ENCODE measurements at regions of chr3 and their contacts with region 1.

Region 1: GRCh38 chr3:120095226-120095978 is 1.2 kb upstream of the GSK3B start:
- DNase-seq: peak; percentile 91
- ATAC-seq: peak; percentile 44
- H3K4me3 Mint-ChIP-seq: no peak overlapping the region
- H3K27ac Mint-ChIP-seq: no peak overlapping the region
- H3K4me1 Mint-ChIP-seq: peaks cover 18% of the 10 kb centered on the region
- H3K27me3 Mint-ChIP-seq: no peaks in the 10 kb centered on the region

Region 2: GRCh38 chr3:119559441-119559963 is 535.9 kb before region 1 on chr3 and contains the start of gene CD80:
- POLR2A ChIA-PET with region 1: interaction called, 13 read pairs
- DNase-seq: peak; percentile 68
- ATAC-seq: peak; percentile 91
- H3K4me3 Mint-ChIP-seq: peak within 1 kb of the TSS; percentile 83
- H3K27ac Mint-ChIP-seq: peak within 1 kb of the TSS; percentile 85
- H3K4me1 Mint-ChIP-seq: peaks cover 46% of the 10 kb centered on the region
- H3K27me3 Mint-ChIP-seq: no peaks in the 10 kb centered on the region
- total RNA-seq, gene CD80: 11.6 to 15.2 TPM

Region 3: GRCh38 chr3:119912220-119912619 is 183.2 kb before region 1 on chr3:
- POLR2A ChIA-PET with region 1: interaction called, 16 read pairs
- DNase-seq: no peak
- ATAC-seq: peak; percentile 70
- H3K4me3 Mint-ChIP-seq: peak overlapping the region; percentile 67
- H3K27ac Mint-ChIP-seq: peak overlapping the region; percentile 68
- H3K4me1 Mint-ChIP-seq: peaks cover 20% of the 10 kb centered on the region
- H3K27me3 Mint-ChIP-seq: no peaks in the 10 kb centered on the region

Region 4: GRCh38 chr3:119990888-119991287 is 104.5 kb before region 1 on chr3:
- POLR2A ChIA-PET with region 1: no interaction called
- DNase-seq: no peak
- ATAC-seq: no peak
- H3K4me3 Mint-ChIP-seq: no peak overlapping the region
- H3K27ac Mint-ChIP-seq: no peak overlapping the region
- H3K4me1 Mint-ChIP-seq: peaks cover 6% of the 10 kb centered on the region
- H3K27me3 Mint-ChIP-seq: no peaks in the 10 kb centered on the region

Region 5: GRCh38 chr3:120052225-120052624 is 43.2 kb before region 1 on chr3:
- POLR2A ChIA-PET with region 1: interaction called, 16 read pairs
- DNase-seq: no peak
- ATAC-seq: peak; percentile 85
- H3K4me3 Mint-ChIP-seq: peak overlapping the region; percentile 28
- H3K27ac Mint-ChIP-seq: peak overlapping the region; percentile 21
- H3K4me1 Mint-ChIP-seq: peaks cover 41% of the 10 kb centered on the region
- H3K27me3 Mint-ChIP-seq: no peaks in the 10 kb centered on the region

Region 6: GRCh38 chr3:120596116-120596852 is 500.9 kb after region 1 on chr3 and contains the start of gene NDUFB4:
- POLR2A ChIA-PET with region 1: interaction called, 15 read pairs
- DNase-seq: peak; percentile 90
- ATAC-seq: peak; percentile 99
- H3K4me3 Mint-ChIP-seq: peak within 1 kb of the TSS; percentile 93
- H3K27ac Mint-ChIP-seq: peak within 1 kb of the TSS; percentile 92
- H3K4me1 Mint-ChIP-seq: peaks cover 12% of the 10 kb centered on the region
- H3K27me3 Mint-ChIP-seq: peaks cover 6% of the 10 kb centered on the region
- total RNA-seq, gene NDUFB4: 120 to 121 TPM